A673 (cell line): ENCODE measurements at regions of chr14 and their contacts with region 1.

Region 1: GRCh38 chr14:52068615-52069303 is at the start of gene NID2:
- DNase-seq: peak; percentile 96
- H3K4me3 ChIP-seq: peak within 1 kb of the TSS; percentile 65
- H3K27ac ChIP-seq: peak within 1 kb of the TSS; percentile 45
- H3K4me1 ChIP-seq: peaks cover 13% of the 10 kb centered on the region
- H3K27me3 ChIP-seq: peaks cover 7% of the 10 kb centered on the region
- CTCF ChIP-seq: no peak
- total RNA-seq, gene NID2: 12.6 and 20.3 TPM in 2 replicates

Region 2: GRCh38 chr14:51310505-51310944 is 758.2 kb before region 1 on chr14:
- CTCF ChIA-PET with region 1: no interaction called
- POLR2A ChIA-PET with region 1: interaction called, 23 read pairs
- intact Hi-C with region 1: no loop called
- DNase-seq: no peak
- H3K4me3 ChIP-seq: no peak overlapping the region
- H3K27ac ChIP-seq: no peak overlapping the region
- H3K4me1 ChIP-seq: no peaks in the 10 kb centered on the region
- H3K27me3 ChIP-seq: no peaks in the 10 kb centered on the region
- CTCF ChIP-seq: no peak

Region 3: DNA sequence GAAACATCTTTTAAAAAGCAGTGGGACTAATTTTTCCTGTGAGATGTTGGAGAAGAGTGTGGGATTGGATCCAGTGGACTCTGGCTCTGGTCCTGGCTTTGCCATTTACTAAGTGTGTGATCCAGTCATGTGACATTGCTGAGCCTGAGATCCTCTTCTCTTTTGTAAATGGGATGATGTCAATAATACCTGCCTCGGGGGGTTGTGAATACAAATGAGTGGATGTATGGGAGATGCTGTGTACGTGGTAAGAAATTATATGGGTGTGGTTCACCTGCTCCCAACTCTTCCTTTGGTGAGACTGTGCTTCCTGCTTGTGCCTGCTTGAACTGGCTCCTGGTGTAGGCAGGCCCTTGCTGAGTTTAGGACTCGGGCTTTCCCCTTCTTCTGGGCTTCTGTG is 606.6 kb before region 1 on chr14:
- CTCF ChIA-PET with region 1: no interaction called
- POLR2A ChIA-PET with region 1: interaction called, 12 read pairs
- intact Hi-C with region 1: no loop called
- DNase-seq: no peak
- H3K4me3 ChIP-seq: no peak overlapping the region
- H3K27ac ChIP-seq: no peak overlapping the region
- H3K4me1 ChIP-seq: no peaks in the 10 kb centered on the region
- H3K27me3 ChIP-seq: no peaks in the 10 kb centered on the region
- CTCF ChIP-seq: no peak

Region 4: GRCh38 chr14:51592836-51593235 is 475.9 kb before region 1 on chr14:
- CTCF ChIA-PET with region 1: no interaction called
- POLR2A ChIA-PET with region 1: no interaction called
- intact Hi-C with region 1: no loop called
- DNase-seq: no peak
- H3K4me3 ChIP-seq: no peak overlapping the region
- H3K27ac ChIP-seq: no peak overlapping the region
- H3K4me1 ChIP-seq: no peaks in the 10 kb centered on the region
- H3K27me3 ChIP-seq: no peaks in the 10 kb centered on the region
- CTCF ChIP-seq: no peak

Region 5: DNA sequence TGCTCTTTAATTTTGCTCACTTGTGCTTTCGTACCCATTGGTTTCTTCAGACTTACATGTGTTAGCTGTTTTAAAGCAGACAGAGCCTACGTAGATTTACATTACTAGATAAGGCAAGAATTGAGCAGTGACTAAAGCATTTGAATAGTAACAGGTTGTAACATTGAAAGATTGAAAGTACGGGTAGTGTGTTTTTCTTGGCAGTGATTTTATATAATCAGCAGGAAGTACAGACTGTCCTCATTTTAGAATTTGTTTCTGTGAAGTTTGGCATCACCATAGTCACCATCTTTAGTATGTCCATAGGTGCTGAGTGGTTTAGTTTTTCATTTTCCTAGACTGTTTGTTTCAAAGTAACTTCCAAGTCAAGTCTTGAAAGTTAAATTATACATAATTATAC is 65.4 kb before region 1 on chr14:
- CTCF ChIA-PET with region 1: no interaction called
- POLR2A ChIA-PET with region 1: no interaction called
- intact Hi-C with region 1: loop called (anchors 5 kb)
- DNase-seq: no peak
- H3K4me3 ChIP-seq: no peak overlapping the region
- H3K27ac ChIP-seq: no peak overlapping the region
- H3K4me1 ChIP-seq: peaks cover 5% of the 10 kb centered on the region
- H3K27me3 ChIP-seq: no peaks in the 10 kb centered on the region
- CTCF ChIP-seq: no peak

Region 6: DNA sequence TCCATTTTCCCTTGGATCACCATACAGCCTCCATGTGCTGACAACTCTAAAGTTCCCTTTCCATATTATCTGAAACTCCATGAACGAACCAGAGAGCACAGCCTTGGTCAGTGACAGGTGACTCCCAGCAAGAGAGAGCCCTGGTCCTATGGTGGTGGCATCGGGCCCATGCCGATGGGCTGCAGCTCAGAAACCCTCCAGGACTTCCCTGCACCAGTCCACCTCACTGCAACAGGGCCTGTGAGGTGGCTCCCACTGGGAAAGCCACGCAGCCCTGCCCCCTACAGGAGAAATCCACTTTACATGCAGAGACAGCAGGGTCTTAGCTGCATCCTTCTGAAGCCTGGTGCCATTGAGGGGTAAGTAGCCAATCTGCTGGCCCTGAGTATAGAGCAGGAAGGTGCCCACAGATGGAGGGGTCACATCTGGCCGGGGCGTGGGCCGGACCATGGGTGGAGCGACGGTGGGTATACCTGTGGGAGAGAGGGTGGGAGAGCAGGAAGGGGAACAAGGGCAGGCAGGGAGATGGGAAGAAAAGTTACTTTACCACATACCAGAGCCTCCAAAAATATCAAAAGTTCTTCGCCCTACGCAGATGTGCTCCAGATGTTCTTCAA is 54.7 kb before region 1 on chr14:
- CTCF ChIA-PET with region 1: interaction called, 5 read pairs
- POLR2A ChIA-PET with region 1: no interaction called
- intact Hi-C with region 1: loop called (anchors 5 kb)
- DNase-seq: peak; percentile 49
- H3K4me3 ChIP-seq: no peak overlapping the region
- H3K27ac ChIP-seq: no peak overlapping the region
- H3K4me1 ChIP-seq: peaks cover 27% of the 10 kb centered on the region
- H3K27me3 ChIP-seq: no peaks in the 10 kb centered on the region
- CTCF ChIP-seq: peak; percentile 66